ENCODE measurements at regions of chr14 and their contacts with region 1.

Region 1: DNA sequence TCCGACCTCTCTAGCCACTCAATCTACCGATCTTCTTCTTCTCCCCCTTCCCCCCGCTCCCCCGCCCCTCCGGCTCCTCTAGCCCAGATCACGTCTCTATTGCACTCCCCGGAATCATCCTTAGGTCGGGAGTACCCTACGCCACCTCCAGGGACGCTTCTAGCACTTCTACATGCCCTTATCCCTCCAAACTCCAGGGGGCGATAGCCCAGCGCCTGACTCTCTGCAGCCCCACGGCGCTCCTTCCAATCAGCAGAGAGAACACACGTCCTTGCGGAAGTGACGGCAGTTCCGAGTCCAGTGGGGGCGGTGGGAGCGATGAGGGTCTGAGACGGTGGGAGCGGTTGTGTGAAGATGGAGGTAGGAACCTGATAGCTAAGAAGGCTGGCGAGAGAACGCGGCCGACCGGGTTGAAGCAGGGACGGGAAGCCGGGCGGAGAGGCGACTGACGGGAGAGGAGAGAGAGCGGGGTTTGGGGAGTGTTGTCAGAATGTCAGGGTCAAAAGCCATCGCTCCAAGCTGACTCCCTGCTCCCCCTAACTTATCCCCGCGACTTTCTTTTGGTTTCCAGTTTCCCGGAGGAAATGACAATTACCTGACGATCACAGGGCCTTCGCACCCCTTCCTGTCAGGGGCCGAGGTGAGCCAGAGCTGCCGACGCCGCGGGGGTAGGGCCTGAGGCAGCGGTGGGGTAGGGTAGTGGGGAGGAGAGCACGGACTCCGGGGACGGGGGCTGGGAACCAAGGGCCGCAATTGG is at the starts of genes RAB2B and TOX4:
- DNase-seq: peak; percentile 95 to 97 (median 97)
- ATAC-seq: peak; percentile 99 to 100 (median 100)
- H3K4me3 ChIP-seq: peak within 1 kb of the TSS; percentile 59 to 98 (median 84)
- H3K27ac ChIP-seq: peak within 1 kb of the TSS; percentile 14 to 90 (median 84)
- H3K4me1 ChIP-seq: peaks cover 7 to 36% (median 19%) of the 10 kb centered on the region in 12 donors
- H3K27me3 ChIP-seq: no peaks in the 10 kb centered on the region
- CTCF ChIP-seq: peak; percentile 86 to 99 (median 94)
- POLR2A ChIP-seq: peak in 1 of 2 donors; percentile 77
- total RNA-seq, gene RAB2B: 13.3 to 24.5 (median 17.2) TPM
- total RNA-seq, gene TOX4: 51.1 to 100 (median 87.4) TPM

Region 2: GRCh38 chr14:21437063-21437901 is 39.8 kb before region 1 on chr14:
- intact Hi-C with region 1: loop called in 1 of 10 experiments (anchors 1 kb)
- DNase-seq: peak; percentile 99 to 100 (median 99)
- ATAC-seq: peak; percentile 99 to 100 (median 100)
- H3K4me3 ChIP-seq: peak overlapping the region; percentile 47 to 96 (median 86)
- H3K27ac ChIP-seq: peak overlapping the region; percentile 83 to 95 (median 90)
- H3K4me1 ChIP-seq: peaks cover 0 to 39% (median 23%) of the 10 kb centered on the region in 12 donors
- H3K27me3 ChIP-seq: no peaks in the 10 kb centered on the region
- CTCF ChIP-seq: no peak
- POLR2A ChIP-seq: peak in 1 of 2 donors; percentile 77

Region 3: GRCh38 chr14:21510735-21511657 is 33.9 kb after region 1 on chr14 and contains the start of gene METTL3:
- intact Hi-C with region 1: loop called in 3 of 10 experiments (anchors 1 to 5 kb)
- DNase-seq: peak; percentile 96 to 99 (median 98)
- ATAC-seq: peak; percentile 99 to 100 (median 100)
- H3K4me3 ChIP-seq: peak within 1 kb of the TSS; percentile 64 to 94 (median 82)
- H3K27ac ChIP-seq: peak within 1 kb of the TSS; percentile 55 to 92 (median 82)
- H3K4me1 ChIP-seq: peaks cover 0 to 28% (median 13%) of the 10 kb centered on the region in 12 donors
- H3K27me3 ChIP-seq: no peaks in the 10 kb centered on the region
- CTCF ChIP-seq: peak in 1 of 12 donors; percentile 7
- POLR2A ChIP-seq: no peak
- total RNA-seq, gene METTL3: 21.0 to 37.0 (median 25.2) TPM

Measured in heart left ventricle (tissue), 16 donors.